ENCODE measurements at regions of chr1 and their contacts with region 1.

Region 1: DNA sequence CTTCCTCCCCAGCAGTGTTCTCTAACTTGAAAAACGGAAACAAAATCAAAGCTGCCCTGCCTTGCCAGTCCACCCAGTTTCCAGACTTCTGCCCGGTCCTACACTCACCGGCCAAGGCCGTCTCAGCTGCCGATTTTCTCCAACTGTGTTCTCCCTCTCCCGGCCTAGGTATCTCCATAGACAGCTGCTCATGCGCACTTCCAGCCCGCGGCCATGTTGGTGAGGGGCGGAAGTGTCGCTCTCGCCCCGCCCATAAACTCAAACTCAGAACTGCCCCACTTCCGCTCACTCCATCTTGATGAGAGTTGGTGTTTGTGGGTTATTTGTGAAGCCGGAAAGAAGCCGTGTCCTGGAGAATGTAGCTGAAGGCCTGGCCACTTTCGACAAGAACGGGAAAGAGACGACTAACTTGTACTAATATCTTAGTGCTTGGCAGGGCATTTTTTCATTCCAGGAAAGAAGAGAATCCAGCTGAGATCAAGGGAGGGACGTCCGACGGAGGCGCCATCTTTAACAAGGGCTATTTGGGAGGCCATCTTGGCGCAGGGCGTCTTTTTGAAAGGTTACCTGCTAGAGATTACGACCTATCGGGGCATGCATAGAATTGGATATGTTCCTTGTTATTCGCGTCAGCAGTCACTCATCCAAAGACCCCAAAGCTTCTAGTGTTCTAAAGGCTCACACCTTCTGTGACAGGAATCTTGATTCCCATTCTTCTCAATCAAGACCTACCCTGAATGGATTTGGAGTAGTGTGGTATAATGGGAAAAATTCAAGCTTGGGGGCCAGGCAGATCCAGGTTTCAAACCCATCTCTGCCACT is at the start of gene USF1:
- DNase-seq: peak; percentile 88 to 98 (median 92)
- ATAC-seq: peak; percentile 76
- H3K4me3 ChIP-seq: peak within 1 kb of the TSS; percentile 87 to 96
- H3K4me3 Mint-ChIP-seq: peak within 1 kb of the TSS; percentile 98
- H3K27ac ChIP-seq: peak within 1 kb of the TSS; percentile 82 to 91
- H3K27ac Mint-ChIP-seq: peak within 1 kb of the TSS; percentile 100
- H3K4me1 ChIP-seq: peaks cover 24% of the 10 kb centered on the region
- H3K4me1 Mint-ChIP-seq: peaks cover 50% of the 10 kb centered on the region
- H3K27me3 ChIP-seq: no peaks in the 10 kb centered on the region
- H3K27me3 Mint-ChIP-seq: no peaks in the 10 kb centered on the region
- CTCF ChIP-seq: no peak
- total RNA-seq, gene USF1: 95.6 to 98.8 TPM

Region 2: GRCh38 chr1:160428655-160429054 is 617.3 kb before region 1 on chr1:
- CTCF ChIA-PET with region 1: no interaction called
- POLR2A ChIA-PET with region 1: no interaction called
- intact Hi-C with region 1: no loop called
- DNase-seq: peak in 6 of 9 experiments; percentile 24 to 73 (median 54)
- ATAC-seq: peak; percentile 54
- H3K4me3 ChIP-seq: peak overlapping the region in 1 of 2 experiments; percentile 20
- H3K4me3 Mint-ChIP-seq: peak overlapping the region; percentile 55
- H3K27ac ChIP-seq: peak overlapping the region; percentile 50 to 86
- H3K27ac Mint-ChIP-seq: peak overlapping the region; percentile 86
- H3K4me1 ChIP-seq: peaks cover 63% of the 10 kb centered on the region
- H3K4me1 Mint-ChIP-seq: peaks cover 62% of the 10 kb centered on the region
- H3K27me3 ChIP-seq: no peaks in the 10 kb centered on the region
- H3K27me3 Mint-ChIP-seq: no peaks in the 10 kb centered on the region
- CTCF ChIP-seq: peak; percentile 41

Region 3: DNA sequence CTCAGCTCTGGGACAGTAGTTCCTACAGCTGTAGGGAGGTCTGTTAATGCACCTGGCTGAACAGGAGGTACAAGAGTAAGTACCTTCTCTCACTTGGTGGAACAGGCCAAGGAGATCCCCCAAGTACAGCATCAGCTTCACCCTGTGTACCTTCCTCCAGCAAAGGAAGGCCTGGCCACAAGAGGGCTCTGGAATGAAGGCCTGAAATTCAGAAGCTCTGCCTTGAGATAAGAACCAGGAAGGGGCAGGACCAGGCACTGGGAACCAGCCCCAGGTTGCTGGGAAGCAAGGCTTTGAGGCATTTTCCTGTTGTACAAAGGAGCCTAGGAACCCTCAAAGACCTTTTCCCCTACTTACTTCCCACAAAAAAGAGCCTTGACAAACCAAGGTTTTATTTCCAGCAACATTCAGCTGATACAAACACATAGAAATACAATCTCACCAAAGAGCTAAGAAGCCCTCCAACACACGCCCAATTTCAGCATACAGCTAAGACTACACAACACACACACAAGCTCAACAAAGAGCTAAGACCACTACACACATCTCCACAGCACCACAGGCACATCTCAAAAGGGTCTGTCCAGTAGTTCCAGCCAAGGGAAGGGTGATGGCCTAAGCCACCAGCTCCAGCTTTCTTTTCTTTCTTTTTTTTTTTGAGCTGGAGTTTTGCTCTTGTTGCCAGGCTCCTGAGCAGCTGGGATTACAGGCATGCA is 48.5 kb before region 1 on chr1:
- CTCF ChIA-PET with region 1: interaction called, 12 read pairs
- POLR2A ChIA-PET with region 1: interaction called, 10 read pairs
- intact Hi-C with region 1: no loop called
- DNase-seq: peak in 8 of 9 experiments; percentile 37 to 71 (median 56)
- ATAC-seq: peak; percentile 82
- H3K4me3 ChIP-seq: no peak overlapping the region
- H3K4me3 Mint-ChIP-seq: no peak overlapping the region
- H3K27ac ChIP-seq: no peak overlapping the region
- H3K27ac Mint-ChIP-seq: peak overlapping the region; percentile 29
- H3K4me1 ChIP-seq: no peaks in the 10 kb centered on the region
- H3K4me1 Mint-ChIP-seq: peaks cover 5% of the 10 kb centered on the region
- H3K27me3 ChIP-seq: no peaks in the 10 kb centered on the region
- H3K27me3 Mint-ChIP-seq: no peaks in the 10 kb centered on the region
- CTCF ChIP-seq: peak; percentile 30

Region 4: DNA sequence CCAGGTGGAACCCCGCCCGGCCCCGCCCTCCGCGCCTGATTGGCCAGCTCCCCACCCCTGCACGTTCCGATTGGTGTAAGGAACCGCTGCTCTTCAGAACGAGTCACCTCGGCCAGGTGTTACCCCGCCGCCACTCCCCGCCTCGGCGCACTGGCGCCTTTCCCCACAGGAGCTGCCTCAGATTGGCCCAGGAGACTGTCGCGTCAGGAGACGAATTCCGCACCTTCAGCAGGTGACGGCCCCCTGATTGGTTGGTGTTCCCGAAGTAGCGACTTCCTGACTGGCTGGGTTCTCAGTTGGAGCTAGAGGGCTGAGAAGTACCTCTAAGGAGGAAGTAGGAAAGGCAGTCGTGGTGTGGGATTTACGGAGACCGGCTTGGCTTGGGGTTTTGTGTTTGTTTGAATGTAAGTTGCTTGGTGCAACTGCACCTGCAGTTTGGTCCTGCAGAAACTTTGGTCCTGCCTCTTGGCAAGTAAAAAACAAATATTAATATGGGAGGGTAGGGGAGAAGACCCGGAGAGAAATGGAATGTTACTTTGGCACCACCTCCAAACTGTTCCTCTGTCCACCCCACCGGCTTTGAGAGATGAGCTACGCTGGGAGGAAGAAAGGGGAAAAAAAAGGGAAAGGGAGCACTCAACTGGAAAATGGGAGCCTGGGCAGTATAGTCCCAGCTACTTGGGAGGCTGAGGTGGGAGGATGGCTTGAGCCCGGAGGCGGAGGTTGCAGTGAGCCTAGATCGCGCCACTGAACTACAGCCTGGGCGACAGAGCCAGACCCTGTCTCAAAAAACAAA is 24.6 kb before region 1 on chr1:
- CTCF ChIA-PET with region 1: interaction called, 5 read pairs
- POLR2A ChIA-PET with region 1: interaction called, 33 read pairs
- intact Hi-C with region 1: loop called in 1 of 2 experiments (anchors 1 kb)
- DNase-seq: peak; percentile 75 to 95 (median 89)
- ATAC-seq: peak; percentile 94
- H3K4me3 ChIP-seq: peak overlapping the region; percentile 51 to 89
- H3K4me3 Mint-ChIP-seq: peak overlapping the region; percentile 93
- H3K27ac ChIP-seq: peak overlapping the region; percentile 22 to 73
- H3K27ac Mint-ChIP-seq: peak overlapping the region; percentile 83
- H3K4me1 ChIP-seq: peaks cover 14% of the 10 kb centered on the region
- H3K4me1 Mint-ChIP-seq: peaks cover 37% of the 10 kb centered on the region
- H3K27me3 ChIP-seq: no peaks in the 10 kb centered on the region
- H3K27me3 Mint-ChIP-seq: no peaks in the 10 kb centered on the region
- CTCF ChIP-seq: no peak

Region 5: DNA sequence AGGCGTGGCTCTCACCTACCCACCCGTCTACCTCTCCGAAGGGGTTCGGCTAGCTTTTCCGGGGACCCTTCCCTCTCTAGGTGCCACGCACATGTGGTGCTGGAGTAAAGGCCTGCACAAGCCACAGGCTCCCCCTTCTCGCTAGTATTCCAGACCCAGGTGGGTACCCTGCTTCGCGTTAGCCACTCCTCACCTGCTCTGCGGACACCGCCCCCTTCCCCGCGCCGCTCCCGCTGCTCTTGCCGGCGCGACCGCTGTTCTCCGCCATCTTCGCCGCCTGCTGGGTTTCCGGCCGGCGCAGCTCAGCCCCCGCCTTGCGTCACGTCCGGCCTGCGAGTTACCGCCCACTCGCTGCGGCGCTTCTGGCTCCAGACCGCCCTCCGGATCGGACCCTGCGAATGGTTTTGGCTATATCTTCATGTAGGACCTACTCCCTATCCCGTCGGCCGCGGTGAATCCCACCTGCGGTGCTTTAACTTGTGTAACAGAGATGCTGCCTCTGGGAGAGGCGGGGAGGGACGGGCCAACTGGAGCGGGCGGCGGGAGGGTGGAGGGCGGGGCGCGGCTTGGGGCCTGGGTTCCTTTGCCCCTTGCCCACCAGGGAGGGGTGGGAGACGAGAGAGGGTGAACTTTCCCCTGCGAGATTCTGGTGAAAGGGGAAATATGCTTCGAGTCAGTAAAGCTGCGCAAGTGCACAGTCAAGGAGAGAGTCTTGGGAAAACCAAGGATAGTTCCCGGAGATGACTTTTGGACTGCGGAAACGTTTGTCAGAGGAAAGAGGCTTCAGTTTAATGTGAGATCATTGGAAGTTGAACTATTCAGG is 72.0 kb after region 1 on chr1 and contains the starts of genes NIT1 and PFDN2:
- CTCF ChIA-PET with region 1: no interaction called
- POLR2A ChIA-PET with region 1: interaction called, 11 read pairs
- intact Hi-C with region 1: loop called (anchors 1 to 2 kb)
- DNase-seq: peak; percentile 67 to 93 (median 84)
- ATAC-seq: peak; percentile 72
- H3K4me3 ChIP-seq: peak within 1 kb of the TSS; percentile 95 to 96
- H3K4me3 Mint-ChIP-seq: peak within 1 kb of the TSS; percentile 93
- H3K27ac ChIP-seq: peak within 1 kb of the TSS; percentile 91 to 93
- H3K27ac Mint-ChIP-seq: peak within 1 kb of the TSS; percentile 95
- H3K4me1 ChIP-seq: peaks cover 43% of the 10 kb centered on the region
- H3K4me1 Mint-ChIP-seq: peaks cover 60% of the 10 kb centered on the region
- H3K27me3 ChIP-seq: no peaks in the 10 kb centered on the region
- H3K27me3 Mint-ChIP-seq: no peaks in the 10 kb centered on the region
- CTCF ChIP-seq: no peak
- total RNA-seq, gene NIT1: 11.5 to 12.8 TPM
- total RNA-seq, gene PFDN2: 64.7 to 75.5 TPM

Region 6: DNA sequence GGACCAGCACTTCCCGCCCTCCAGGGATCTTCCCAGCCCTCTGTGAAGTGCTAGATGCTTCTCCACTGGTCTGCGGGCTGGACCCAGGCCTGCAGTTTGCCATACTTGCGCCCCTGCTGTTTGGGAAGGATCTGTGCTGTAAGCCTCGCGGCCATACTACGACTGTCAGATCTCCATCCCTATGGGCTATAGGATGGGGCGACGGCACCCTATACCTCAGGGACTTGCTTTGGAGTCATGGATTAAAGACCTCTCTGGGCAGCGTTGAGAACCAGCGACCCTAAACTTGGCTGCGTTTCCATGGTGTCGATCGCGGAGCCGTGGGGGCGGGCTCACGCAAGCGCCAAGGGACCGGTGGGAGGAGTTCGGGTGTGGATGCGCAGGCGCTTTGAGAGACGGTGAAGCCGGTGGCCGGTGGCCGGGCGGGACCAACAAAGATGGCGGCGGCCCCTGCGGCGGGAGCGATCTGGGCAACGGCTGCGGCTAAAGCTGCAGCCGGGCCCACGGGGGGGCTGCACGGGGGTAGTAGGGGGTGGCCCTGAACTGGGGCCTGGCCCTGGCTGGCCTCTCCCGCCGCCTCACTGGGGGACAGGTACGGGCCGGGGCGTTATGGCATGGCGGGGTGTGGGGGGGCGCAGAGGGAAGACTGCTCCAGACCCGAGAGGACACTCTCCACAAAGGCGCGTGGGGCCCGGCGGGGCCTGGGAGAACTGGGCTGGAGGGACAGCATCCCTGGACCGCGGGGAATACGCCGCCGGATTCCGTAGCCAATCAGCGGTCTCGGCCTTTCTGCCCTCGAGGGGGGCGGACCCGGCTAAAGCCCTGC is 113.3 kb after region 1 on chr1 and contains the start of gene USP21:
- CTCF ChIA-PET with region 1: interaction called, 4 read pairs
- POLR2A ChIA-PET with region 1: interaction called, 5 read pairs
- intact Hi-C with region 1: loop called in 1 of 2 experiments (anchors 5 kb)
- DNase-seq: peak; percentile 84 to 95 (median 93)
- ATAC-seq: peak; percentile 96
- H3K4me3 ChIP-seq: peak within 1 kb of the TSS; percentile 76 to 82
- H3K4me3 Mint-ChIP-seq: peak within 1 kb of the TSS; percentile 94
- H3K27ac ChIP-seq: peak within 1 kb of the TSS; percentile 72 to 82
- H3K27ac Mint-ChIP-seq: peak within 1 kb of the TSS; percentile 95
- H3K4me1 ChIP-seq: peaks cover 37% of the 10 kb centered on the region
- H3K4me1 Mint-ChIP-seq: peaks cover 58% of the 10 kb centered on the region
- H3K27me3 ChIP-seq: no peaks in the 10 kb centered on the region
- H3K27me3 Mint-ChIP-seq: no peaks in the 10 kb centered on the region
- CTCF ChIP-seq: no peak
- total RNA-seq, gene USP21: 34.8 to 38.1 TPM

Region 7: DNA sequence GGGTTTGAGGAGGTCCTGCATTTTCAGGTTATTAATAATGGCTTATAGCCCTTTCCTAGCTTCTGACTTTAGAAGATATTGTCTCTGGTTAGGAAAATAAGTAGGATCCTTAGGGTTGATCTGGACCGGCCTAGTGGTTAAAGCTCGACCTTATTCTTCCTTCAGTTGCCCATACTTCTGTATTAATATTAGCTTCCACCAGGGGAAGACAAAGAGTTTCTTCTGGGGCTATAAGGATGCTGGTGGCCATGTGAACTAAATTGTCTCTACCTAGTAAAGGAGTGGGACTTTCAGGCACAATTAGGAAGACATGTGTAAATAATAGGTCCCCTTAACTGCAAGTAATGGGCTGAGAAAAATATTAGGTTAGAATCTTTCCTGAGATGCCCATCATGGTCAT is 438.7 kb after region 1 on chr1:
- CTCF ChIA-PET with region 1: no interaction called
- POLR2A ChIA-PET with region 1: no interaction called
- intact Hi-C with region 1: no loop called
- DNase-seq: peak in 2 of 9 experiments; percentile 17 to 25
- ATAC-seq: no peak
- H3K4me3 ChIP-seq: no peak overlapping the region
- H3K4me3 Mint-ChIP-seq: no peak overlapping the region
- H3K27ac ChIP-seq: no peak overlapping the region
- H3K27ac Mint-ChIP-seq: no peak overlapping the region
- H3K4me1 ChIP-seq: no peaks in the 10 kb centered on the region
- H3K4me1 Mint-ChIP-seq: no peaks in the 10 kb centered on the region
- H3K27me3 ChIP-seq: peaks cover 0 to 4% of the 10 kb centered on the region in 2 experiments
- H3K27me3 Mint-ChIP-seq: peaks cover 15% of the 10 kb centered on the region
- CTCF ChIP-seq: peak; percentile 20

Measured in CD8-positive, alpha-beta T cell (primary cell).